ENCODE measurements at regions of chr1 and their contacts with region 1.

Region 1: GRCh38 chr1:84573967-84574842 is at the start of gene CTBS:
- DNase-seq: peak; percentile 69 to 84 (median 82)
- ATAC-seq: peak; percentile 96
- H3K4me3 ChIP-seq: peak within 1 kb of the TSS; percentile 77
- H3K4me3 Mint-ChIP-seq: peak within 1 kb of the TSS; percentile 97 to 99 (median 99)
- H3K27ac ChIP-seq: peak within 1 kb of the TSS; percentile 99
- H3K27ac Mint-ChIP-seq: peak within 1 kb of the TSS; percentile 98 to 100 (median 100)
- H3K4me1 ChIP-seq: peaks cover 9 to 13% of the 10 kb centered on the region in 2 donors
- H3K4me1 Mint-ChIP-seq: peaks cover 29 to 51% (median 40%) of the 10 kb centered on the region in 7 donors
- H3K27me3 ChIP-seq: no peaks in the 10 kb centered on the region
- H3K27me3 Mint-ChIP-seq: peaks cover 0 to 2% (median 0%) of the 10 kb centered on the region in 5 donors
- total RNA-seq, gene CTBS: 17.4 to 22.3 (median 19.0) TPM

Region 2: GRCh38 chr1:84298328-84298683 is 275.9 kb before region 1 on chr1:
- CTCF ChIA-PET with region 1: no interaction called
- POLR2A ChIA-PET with region 1: interaction called, 4 read pairs
- intact Hi-C with region 1: loop called (anchors 1 to 5 kb)
- DNase-seq: peak; percentile 40 to 65 (median 46)
- ATAC-seq: peak; percentile 88
- H3K4me3 ChIP-seq: peak overlapping the region; percentile 92
- H3K4me3 Mint-ChIP-seq: peak overlapping the region; percentile 83 to 95 (median 90)
- H3K27ac ChIP-seq: peak overlapping the region; percentile 69
- H3K27ac Mint-ChIP-seq: peak overlapping the region; percentile 67 to 85 (median 79)
- H3K4me1 ChIP-seq: peaks cover 4 to 25% of the 10 kb centered on the region in 2 donors
- H3K4me1 Mint-ChIP-seq: peaks cover 17 to 52% (median 42%) of the 10 kb centered on the region in 7 donors
- H3K27me3 ChIP-seq: no peaks in the 10 kb centered on the region
- H3K27me3 Mint-ChIP-seq: peaks cover 0 to 16% (median 6%) of the 10 kb centered on the region in 5 donors

Region 3: DNA sequence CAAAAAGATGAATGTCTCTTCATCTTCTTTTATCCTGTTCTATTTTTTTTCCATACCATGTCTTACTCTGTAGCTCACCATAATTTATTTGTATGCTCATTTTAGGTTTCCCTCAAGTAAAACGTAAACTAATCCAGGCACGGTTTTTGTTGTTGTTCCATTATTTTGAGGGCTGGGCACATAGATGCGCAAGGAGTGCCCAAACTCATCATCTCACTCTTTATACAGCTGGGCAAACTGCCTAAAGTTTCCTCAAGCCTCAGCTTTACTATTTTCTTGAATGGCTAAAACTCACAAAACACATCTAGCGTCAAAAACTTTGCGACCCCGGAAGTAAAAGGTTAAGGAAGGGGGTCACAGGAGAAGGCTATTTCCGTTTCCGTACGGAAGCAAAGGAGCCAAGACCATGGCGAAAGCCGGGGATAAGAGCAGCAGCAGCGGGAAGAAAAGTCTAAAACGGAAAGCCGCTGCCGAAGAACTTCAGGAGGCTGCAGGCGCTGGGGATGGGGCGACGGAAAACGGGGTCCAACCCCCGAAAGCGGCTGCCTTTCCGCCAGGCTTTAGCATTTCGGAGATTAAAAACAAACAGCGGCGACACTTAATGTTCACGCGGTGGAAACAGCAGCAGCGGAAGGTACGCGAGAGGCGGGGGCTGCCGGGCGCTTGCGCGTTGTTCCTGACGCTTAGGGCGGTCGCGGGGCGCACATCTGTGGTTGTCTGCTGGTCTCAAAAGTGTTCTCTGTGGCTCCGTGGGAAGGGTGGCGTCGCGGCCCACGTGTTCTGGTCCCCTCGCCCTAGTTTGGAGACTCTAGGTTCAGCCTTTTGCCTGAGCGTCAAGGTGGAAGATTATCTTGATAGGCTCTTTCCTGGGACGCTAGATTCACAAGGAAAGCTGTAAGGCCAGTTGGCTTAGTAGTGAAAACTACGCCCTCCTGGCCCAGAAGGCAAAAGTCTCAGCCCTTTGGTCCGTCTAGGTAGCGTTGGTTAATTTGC is 95.0 kb before region 1 on chr1 and contains the start of gene RPF1:
- CTCF ChIA-PET with region 1: interaction called, 3 read pairs
- POLR2A ChIA-PET with region 1: interaction called, 9 read pairs
- intact Hi-C with region 1: loop called (anchors 1 kb)
- DNase-seq: peak; percentile 61 to 88 (median 83)
- ATAC-seq: peak; percentile 97
- H3K4me3 ChIP-seq: peak within 1 kb of the TSS; percentile 72
- H3K4me3 Mint-ChIP-seq: peak within 1 kb of the TSS; percentile 88 to 100 (median 98)
- H3K27ac ChIP-seq: peak within 1 kb of the TSS; percentile 80
- H3K27ac Mint-ChIP-seq: peak within 1 kb of the TSS; percentile 98 to 100 (median 99)
- H3K4me1 ChIP-seq: peaks cover 22 to 28% of the 10 kb centered on the region in 2 donors
- H3K4me1 Mint-ChIP-seq: peaks cover 29 to 60% (median 49%) of the 10 kb centered on the region in 7 donors
- H3K27me3 ChIP-seq: peaks cover 0 to 7% of the 10 kb centered on the region in 2 donors
- H3K27me3 Mint-ChIP-seq: peaks cover 21 to 35% (median 26%) of the 10 kb centered on the region in 5 donors
- total RNA-seq, gene RPF1: 35.5 to 52.3 (median 44.1) TPM

Region 4: DNA sequence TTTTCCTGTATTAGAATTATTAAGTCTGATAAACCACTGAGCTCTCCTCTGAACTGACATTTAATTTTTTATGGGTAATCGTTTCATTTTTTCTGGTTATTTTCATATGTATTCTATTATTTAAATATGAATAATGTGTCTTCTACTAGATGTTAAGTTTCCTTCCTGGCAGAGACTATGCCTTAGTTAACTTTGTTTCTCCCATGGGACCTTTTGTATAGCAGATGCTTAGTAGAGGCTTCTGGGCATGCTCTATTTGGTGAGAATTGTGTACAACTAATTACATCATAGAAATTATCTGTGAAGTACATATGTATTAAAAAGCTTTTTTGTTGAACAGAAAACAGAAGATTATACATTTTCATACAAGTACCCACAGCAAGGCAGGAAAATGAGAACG is 23.4 kb before region 1 on chr1:
- CTCF ChIA-PET with region 1: no interaction called
- POLR2A ChIA-PET with region 1: interaction called, 8 read pairs
- intact Hi-C with region 1: loop called in 1 of 2 experiments (anchors 2 kb)
- DNase-seq: no peak
- ATAC-seq: no peak
- H3K4me3 ChIP-seq: no peak overlapping the region
- H3K4me3 Mint-ChIP-seq: no peak overlapping the region
- H3K27ac ChIP-seq: no peak overlapping the region
- H3K27ac Mint-ChIP-seq: no peak overlapping the region
- H3K4me1 ChIP-seq: no peaks in the 10 kb centered on the region
- H3K4me1 Mint-ChIP-seq: peaks cover 0 to 6% (median 0%) of the 10 kb centered on the region in 7 donors
- H3K27me3 ChIP-seq: no peaks in the 10 kb centered on the region
- H3K27me3 Mint-ChIP-seq: no peaks in the 10 kb centered on the region

Region 5: DNA sequence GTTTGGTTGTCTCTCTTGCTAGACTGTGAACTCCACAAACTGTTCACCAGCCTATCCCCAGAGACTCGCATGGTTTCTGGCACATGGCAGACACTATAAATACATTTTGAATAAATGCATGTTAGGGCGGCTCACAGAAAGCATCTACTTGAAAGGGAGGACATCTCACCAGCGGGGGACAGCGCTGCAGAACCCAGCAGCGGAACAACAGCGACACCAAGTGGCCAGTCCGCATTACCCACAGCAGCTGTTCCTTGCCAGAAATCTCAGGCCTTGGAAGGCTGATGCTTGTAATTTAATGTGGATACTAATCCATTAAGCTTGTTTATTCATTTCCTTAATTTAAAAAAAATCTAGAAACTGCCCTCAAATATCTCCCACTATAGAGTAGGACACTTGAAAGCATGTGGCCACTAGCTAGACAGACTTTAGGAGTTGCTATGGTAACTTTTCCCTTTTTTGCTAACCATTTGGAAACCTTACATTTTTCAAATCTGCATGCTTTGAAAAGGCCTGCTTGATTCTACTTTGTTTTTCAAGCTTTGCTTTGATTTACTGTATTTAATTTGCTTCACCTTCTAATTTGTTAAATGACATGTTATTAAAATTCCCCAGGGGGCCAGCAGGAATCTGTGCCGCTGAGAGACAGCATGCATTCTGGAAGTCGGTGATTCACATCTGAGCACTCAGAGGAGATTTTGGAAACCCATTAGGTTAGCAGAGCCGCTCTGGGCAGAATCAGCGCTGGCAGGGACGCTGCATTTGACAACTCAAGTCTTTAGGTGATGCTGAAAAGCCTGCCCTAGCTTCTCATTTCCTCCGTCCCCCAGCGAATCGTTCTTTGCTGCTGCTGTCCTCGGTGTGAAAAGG is 179.5 kb after region 1 on chr1:
- CTCF ChIA-PET with region 1: interaction called, 3 read pairs
- POLR2A ChIA-PET with region 1: no interaction called
- intact Hi-C with region 1: loop called in 1 of 2 experiments (anchors 1 kb)
- DNase-seq: peak; percentile 47 to 77 (median 67)
- ATAC-seq: peak; percentile 93
- H3K4me3 ChIP-seq: no peak overlapping the region
- H3K4me3 Mint-ChIP-seq: no peak overlapping the region
- H3K27ac ChIP-seq: no peak overlapping the region
- H3K27ac Mint-ChIP-seq: peak overlapping the region in 1 of 9 donors; percentile 29
- H3K4me1 ChIP-seq: no peaks in the 10 kb centered on the region
- H3K4me1 Mint-ChIP-seq: peaks cover 0 to 7% (median 3%) of the 10 kb centered on the region in 7 donors
- H3K27me3 ChIP-seq: no peaks in the 10 kb centered on the region
- H3K27me3 Mint-ChIP-seq: peaks cover 9 to 26% (median 18%) of the 10 kb centered on the region in 5 donors

Region 6: DNA sequence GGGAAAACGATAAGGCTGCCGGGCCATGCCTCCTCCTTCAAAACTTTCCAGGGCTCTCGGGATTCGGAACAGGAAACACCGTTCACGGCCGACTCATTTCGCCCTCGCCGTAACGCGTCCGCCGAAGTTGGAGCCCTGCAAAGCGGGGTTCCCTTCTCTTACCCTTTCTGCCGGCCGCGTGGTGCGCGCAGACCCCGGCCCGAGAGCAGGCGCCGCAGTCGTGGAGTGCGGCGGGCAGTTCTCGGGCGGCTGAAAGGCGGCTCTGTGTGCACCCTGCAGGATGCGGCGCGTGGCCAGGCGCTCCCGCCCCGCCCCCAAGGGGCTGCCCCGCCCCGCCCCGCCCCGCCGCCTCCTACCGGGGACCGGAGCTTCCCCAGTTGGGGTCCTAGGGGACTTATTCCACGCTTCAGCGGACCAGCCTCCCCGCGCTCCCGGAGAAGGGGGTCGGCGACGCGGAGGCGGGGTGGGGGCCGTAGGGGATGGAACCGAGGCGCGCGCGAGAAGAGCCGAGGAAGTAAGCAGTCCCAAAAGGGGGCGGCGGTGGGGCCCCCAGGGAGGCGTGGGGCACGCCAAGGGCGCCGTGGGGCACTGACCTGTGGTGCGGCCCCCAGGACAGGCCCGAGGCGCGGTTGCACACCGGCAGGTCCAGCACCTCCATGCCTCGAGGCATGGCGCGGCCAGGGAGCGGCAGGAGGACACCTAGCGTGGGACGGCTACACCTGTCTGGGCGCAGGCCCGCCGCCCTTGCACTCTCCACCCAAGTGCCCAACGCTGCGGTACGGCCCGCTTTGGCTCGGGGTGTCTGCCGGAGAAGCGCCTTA is 422.9 kb after region 1 on chr1 and contains the start of gene MCOLN2:
- CTCF ChIA-PET with region 1: no interaction called
- POLR2A ChIA-PET with region 1: no interaction called
- intact Hi-C with region 1: loop called in 1 of 2 experiments (anchors 2 kb)
- DNase-seq: peak; percentile 7 to 69 (median 37)
- ATAC-seq: peak; percentile 89
- H3K4me3 ChIP-seq: peak within 1 kb of the TSS; percentile 77
- H3K4me3 Mint-ChIP-seq: peak within 1 kb of the TSS; percentile 80 to 95 (median 86)
- H3K27ac ChIP-seq: no peak within 1 kb of the TSS
- H3K27ac Mint-ChIP-seq: peak within 1 kb of the TSS in 4 of 9 donors; percentile 33 to 85 (median 66)
- H3K4me1 ChIP-seq: peaks cover 17 to 26% of the 10 kb centered on the region in 2 donors
- H3K4me1 Mint-ChIP-seq: peaks cover 13 to 57% (median 16%) of the 10 kb centered on the region in 7 donors
- H3K27me3 ChIP-seq: peaks cover 0 to 13% of the 10 kb centered on the region in 2 donors
- H3K27me3 Mint-ChIP-seq: peaks cover 28 to 55% (median 35%) of the 10 kb centered on the region in 5 donors
- total RNA-seq, gene MCOLN2: 2.5 to 35.7 (median 3.1) TPM

Region 7: DNA sequence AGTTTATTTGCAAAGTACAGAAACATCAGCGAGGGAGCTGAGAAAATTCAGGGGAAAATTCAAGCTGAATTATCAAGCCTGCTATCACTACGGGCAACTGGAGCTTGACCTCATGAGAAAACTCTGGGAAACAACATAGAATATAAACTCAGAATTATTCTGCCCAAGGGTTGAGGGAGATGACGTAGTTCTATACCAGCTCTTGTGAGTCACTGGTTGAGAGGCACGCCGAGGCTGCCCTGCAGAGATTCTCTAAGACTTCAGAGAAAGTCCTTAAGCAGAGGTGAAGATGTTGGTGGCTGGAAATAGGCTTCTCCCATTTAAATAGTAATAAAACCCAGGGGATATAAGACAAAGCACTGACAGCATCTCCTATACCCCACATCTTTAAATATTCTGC is 614.3 kb after region 1 on chr1:
- CTCF ChIA-PET with region 1: no interaction called
- POLR2A ChIA-PET with region 1: no interaction called
- intact Hi-C with region 1: no loop called
- DNase-seq: no peak
- ATAC-seq: no peak
- H3K4me3 ChIP-seq: no peak overlapping the region
- H3K4me3 Mint-ChIP-seq: no peak overlapping the region
- H3K27ac ChIP-seq: no peak overlapping the region
- H3K27ac Mint-ChIP-seq: no peak overlapping the region
- H3K4me1 ChIP-seq: no peaks in the 10 kb centered on the region
- H3K4me1 Mint-ChIP-seq: peaks cover 0 to 15% (median 8%) of the 10 kb centered on the region in 7 donors
- H3K27me3 ChIP-seq: no peaks in the 10 kb centered on the region
- H3K27me3 Mint-ChIP-seq: no peaks in the 10 kb centered on the region